ENCODE measurements at regions of chr18 and their contacts with region 1.

Region 1: GRCh38 chr18:34592961-34593382 is 117.1 kb upstream of the DTNA start:
- DNase-seq: peak in 4 of 5 donors; percentile 61 to 78 (median 68)
- ATAC-seq: peak; percentile 89 to 95 (median 94)
- H3K4me3 ChIP-seq: peak overlapping the region in 11 of 12 donors; percentile 26 to 57 (median 48)
- H3K27ac ChIP-seq: peak overlapping the region; percentile 43 to 86 (median 76)
- H3K4me1 ChIP-seq: peaks cover 0 to 37% (median 6%) of the 10 kb centered on the region in 12 donors
- H3K27me3 ChIP-seq: no peaks in the 10 kb centered on the region
- CTCF ChIP-seq: no peak
- POLR2A ChIP-seq: no peak

Region 2: DNA sequence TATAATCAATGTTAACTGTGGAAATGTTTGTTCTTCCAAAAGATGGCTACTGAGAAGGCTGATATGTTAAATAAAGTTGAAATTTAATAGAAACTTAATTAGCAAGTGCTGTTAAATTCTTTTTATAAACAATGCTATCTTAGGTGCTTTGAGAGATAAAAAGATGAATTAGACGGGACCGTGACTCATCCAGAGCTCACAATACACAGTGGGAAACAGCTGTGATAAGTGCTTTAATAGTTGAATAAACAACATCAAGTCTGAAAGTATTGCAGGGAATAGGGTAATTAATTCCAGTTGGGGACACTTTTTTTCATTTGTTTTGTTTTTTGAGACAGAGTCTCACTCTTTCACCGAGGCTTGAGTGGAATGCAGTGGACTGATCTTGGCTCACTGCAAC is 31.6 kb after region 1 on chr18:
- intact Hi-C with region 1: no loop called
- DNase-seq: no peak
- ATAC-seq: no peak
- H3K4me3 ChIP-seq: no peak overlapping the region
- H3K27ac ChIP-seq: no peak overlapping the region
- H3K4me1 ChIP-seq: peaks cover 0 to 8% (median 1%) of the 10 kb centered on the region in 12 donors
- H3K27me3 ChIP-seq: no peaks in the 10 kb centered on the region
- CTCF ChIP-seq: no peak
- POLR2A ChIP-seq: no peak

Region 3: DNA sequence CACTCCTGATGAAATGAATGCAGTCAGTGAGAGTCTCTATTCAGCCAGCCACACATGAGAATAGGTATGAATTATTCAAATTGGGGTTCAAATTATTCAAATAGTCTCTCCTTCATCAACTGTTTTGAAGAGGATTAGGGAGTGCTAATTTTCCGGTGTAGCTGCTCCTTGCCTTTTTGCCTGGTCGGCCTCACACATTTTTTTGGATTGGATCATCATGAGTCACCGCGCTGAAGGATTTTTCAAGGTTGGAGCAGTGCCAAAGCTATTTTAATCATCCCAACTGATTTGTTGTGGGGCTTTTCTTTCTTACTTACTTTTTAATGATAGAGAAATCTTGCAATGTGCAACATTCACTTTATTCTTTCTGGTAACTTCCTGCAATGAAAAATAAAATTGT is 114.7 kb after region 1 on chr18:
- intact Hi-C with region 1: loop called in 1 of 10 experiments (anchors 10 kb)
- DNase-seq: peak in 4 of 5 donors; percentile 38 to 71 (median 52)
- ATAC-seq: peak; percentile 26 to 72 (median 64)
- H3K4me3 ChIP-seq: no peak overlapping the region
- H3K27ac ChIP-seq: peak overlapping the region in 11 of 12 donors; percentile 49 to 82 (median 72)
- H3K4me1 ChIP-seq: peaks cover 8 to 43% (median 29%) of the 10 kb centered on the region in 12 donors
- H3K27me3 ChIP-seq: no peaks in the 10 kb centered on the region
- CTCF ChIP-seq: no peak
- POLR2A ChIP-seq: no peak